ENCODE measurements at regions of chr4 and their contacts with region 1.

Region 1: DNA sequence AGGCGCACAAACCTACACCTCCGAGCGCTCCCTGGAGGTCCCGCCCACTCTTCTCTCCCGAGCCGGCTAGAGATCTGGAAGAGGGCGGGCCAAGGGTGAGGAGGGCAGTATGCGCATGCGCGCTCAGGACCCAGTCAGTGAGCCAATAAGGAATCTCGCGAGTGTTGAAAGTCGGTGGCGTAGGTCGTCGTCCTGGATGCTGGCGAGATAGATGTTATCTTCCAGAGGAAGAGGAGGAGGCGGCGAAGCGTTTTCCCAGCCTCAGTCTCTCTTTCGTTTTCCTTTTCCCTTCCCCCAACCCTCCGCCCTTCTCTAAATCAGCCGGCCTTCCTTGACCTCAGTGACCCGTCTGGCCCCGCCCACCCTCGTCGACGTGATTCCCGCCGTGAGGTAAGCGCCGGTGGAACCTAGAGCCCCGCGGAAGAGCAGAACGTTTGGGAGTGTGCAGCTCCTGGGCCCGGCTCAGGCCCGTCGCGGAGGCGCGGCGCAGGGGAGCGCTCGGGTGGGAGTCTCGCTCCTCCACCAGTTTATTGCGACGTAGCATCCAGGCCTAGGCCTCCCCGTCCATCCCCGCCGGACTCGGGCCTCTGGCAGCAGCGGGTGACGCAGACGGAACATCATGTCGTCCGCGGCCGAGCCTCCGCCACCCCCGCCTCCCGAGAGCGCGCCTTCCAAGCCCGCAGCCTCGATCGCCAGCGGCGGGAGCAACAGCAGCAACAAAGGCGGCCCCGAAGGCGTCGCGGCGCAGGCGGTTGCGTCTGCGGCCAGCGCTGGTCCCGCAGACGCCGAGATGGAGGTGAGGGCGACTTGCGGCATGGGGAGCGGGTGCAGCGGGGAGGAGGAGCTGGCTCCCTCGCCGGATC is at the start of gene SMARCA5:
- DNase-seq: peak; percentile 96
- H3K4me3 Mint-ChIP-seq: peak within 1 kb of the TSS; percentile 96
- H3K27ac Mint-ChIP-seq: peak within 1 kb of the TSS; percentile 97
- H3K4me1 Mint-ChIP-seq: peaks cover 30% of the 10 kb centered on the region
- H3K27me3 Mint-ChIP-seq: no peaks in the 10 kb centered on the region
- total RNA-seq, gene SMARCA5: 62.4 to 63.5 TPM

Region 2: GRCh38 chr4:142379277-142380057 is 1134.1 kb before region 1 on chr4:
- CTCF ChIA-PET with region 1: no interaction called
- intact Hi-C with region 1: loop called (anchors 10 kb)
- DNase-seq: no peak
- H3K4me3 Mint-ChIP-seq: no peak overlapping the region
- H3K27ac Mint-ChIP-seq: peak overlapping the region; percentile 75
- H3K4me1 Mint-ChIP-seq: peaks cover 72% of the 10 kb centered on the region
- H3K27me3 Mint-ChIP-seq: no peaks in the 10 kb centered on the region

Region 3: GRCh38 chr4:143184217-143185116 is 329.1 kb before region 1 on chr4 and contains the start of gene USP38:
- CTCF ChIA-PET with region 1: no interaction called
- intact Hi-C with region 1: loop called (anchors 1 kb)
- DNase-seq: peak; percentile 93
- H3K4me3 Mint-ChIP-seq: peak within 1 kb of the TSS; percentile 95
- H3K27ac Mint-ChIP-seq: peak within 1 kb of the TSS; percentile 97
- H3K4me1 Mint-ChIP-seq: peaks cover 40% of the 10 kb centered on the region
- H3K27me3 Mint-ChIP-seq: no peaks in the 10 kb centered on the region
- total RNA-seq, gene USP38: 14.4 to 15.5 TPM

Region 4: GRCh38 chr4:143335979-143336780 is 177.4 kb before region 1 on chr4:
- CTCF ChIA-PET with region 1: no interaction called
- intact Hi-C with region 1: loop called (anchors 2 kb)
- DNase-seq: peak; percentile 20
- H3K4me3 Mint-ChIP-seq: peak overlapping the region; percentile 75
- H3K27ac Mint-ChIP-seq: no peak overlapping the region
- H3K4me1 Mint-ChIP-seq: peaks cover 3% of the 10 kb centered on the region
- H3K27me3 Mint-ChIP-seq: peaks cover 40% of the 10 kb centered on the region

Region 5: DNA sequence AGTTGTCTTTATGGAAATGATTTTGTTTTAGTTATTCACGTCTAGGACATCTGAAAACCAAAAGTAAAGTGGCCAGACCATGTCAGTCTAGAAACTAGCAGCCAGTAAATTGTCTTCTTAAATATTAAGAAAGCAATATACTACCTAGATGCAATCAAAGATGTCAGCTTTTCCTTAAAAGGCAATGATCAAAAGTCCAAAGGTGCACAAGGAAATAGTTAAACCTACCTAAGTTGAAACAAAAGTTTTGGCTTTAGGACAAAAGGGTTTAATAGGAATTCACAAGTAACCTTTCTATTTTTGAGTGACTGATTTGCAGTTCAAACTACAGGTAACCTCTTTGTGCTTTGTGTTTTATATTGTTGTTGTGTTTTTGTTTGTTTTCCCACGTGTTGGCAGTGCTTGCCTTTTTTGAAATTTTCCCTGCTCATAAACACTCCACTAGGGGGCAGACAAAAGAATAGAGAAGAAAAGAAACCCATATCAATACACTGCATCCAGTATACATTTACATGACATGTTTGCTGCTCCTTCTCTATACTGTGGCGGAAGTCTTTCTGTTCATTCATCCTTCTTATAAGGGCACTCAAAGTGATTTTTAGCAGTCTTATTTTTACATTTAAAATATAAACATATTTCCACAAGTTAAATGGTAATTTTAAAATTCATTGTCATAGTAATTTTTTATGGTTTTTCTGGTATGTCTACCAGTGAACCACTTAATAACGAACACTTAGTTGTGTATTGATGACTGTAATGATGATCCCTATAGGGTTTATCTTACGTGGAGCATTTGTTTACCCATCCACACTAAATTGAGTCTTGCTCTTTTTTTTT is 114.2 kb before region 1 on chr4:
- CTCF ChIA-PET with region 1: interaction called, 3 read pairs
- intact Hi-C with region 1: loop called (anchors 1 kb)
- DNase-seq: no peak
- H3K4me3 Mint-ChIP-seq: no peak overlapping the region
- H3K27ac Mint-ChIP-seq: no peak overlapping the region
- H3K4me1 Mint-ChIP-seq: peaks cover 8% of the 10 kb centered on the region
- H3K27me3 Mint-ChIP-seq: peaks cover 14% of the 10 kb centered on the region

Region 6: DNA sequence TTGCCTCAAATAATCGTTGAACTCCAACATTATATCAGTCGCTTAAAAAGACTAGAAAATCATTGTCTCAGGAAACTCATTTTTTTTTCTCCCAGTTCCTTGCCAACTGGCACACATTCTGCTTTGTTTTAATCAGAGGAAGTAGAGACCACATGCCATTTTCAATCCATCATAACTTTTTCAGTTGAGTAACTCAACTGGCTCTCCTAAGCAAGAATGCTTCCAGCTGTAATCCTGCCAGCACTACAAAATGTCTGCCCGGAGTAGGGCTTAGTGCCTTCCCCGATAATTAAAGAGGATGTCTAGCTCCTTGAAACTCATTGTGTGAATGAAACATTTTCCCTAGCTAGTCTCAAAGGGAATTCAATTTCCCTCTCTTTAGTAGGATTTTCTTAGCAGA is 153.9 kb after region 1 on chr4:
- CTCF ChIA-PET with region 1: no interaction called
- intact Hi-C with region 1: no loop called
- DNase-seq: no peak
- H3K4me3 Mint-ChIP-seq: no peak overlapping the region
- H3K27ac Mint-ChIP-seq: no peak overlapping the region
- H3K4me1 Mint-ChIP-seq: no peaks in the 10 kb centered on the region
- H3K27me3 Mint-ChIP-seq: no peaks in the 10 kb centered on the region

Measured in activated naive CD4-positive, alpha-beta T cell treated with anti-CD3 and anti-CD28 coated beads for 36 hours (primary cell).